ENCODE measurements at regions of chr1 and their contacts with region 1.

Region 1: GRCh38 chr1:209692745-209693504 is 11.7 kb upstream of the HSD11B1 start:
- DNase-seq: peak; percentile 65
- CTCF ChIP-seq: peak; percentile 65

Region 2: GRCh38 chr1:209576798-209577197 is 116.1 kb before region 1 on chr1:
- CTCF ChIA-PET with region 1: interaction called, 28 read pairs
- POLR2A ChIA-PET with region 1: no interaction called
- DNase-seq: peak; percentile 80
- CTCF ChIP-seq: peak; percentile 91

Region 3: GRCh38 chr1:209601809-209602657 is 90.9 kb before region 1 on chr1:
- CTCF ChIA-PET with region 1: interaction called, 10 read pairs
- POLR2A ChIA-PET with region 1: no interaction called
- DNase-seq: no peak
- CTCF ChIP-seq: peak; percentile 50

Region 4: DNA sequence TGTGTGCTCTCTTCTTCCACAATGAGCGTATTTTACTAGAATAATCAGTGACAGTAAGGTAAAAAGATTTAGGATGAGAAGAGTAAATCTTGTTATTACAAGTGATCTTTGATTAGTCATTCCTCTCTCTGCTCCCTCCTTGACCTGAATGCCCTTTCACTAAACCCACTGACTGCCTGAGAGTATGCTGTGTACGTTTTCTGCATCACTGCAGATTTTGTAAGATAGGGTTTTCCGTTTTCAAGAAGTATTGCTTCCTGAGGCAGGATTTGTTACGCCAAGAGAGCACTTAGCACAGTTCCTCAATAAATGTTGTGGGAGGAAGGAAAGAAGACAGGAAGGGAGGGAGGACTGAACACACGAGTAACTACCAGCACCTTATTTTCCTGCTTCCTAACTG is 33.0 kb before region 1 on chr1:
- CTCF ChIA-PET with region 1: interaction called, 14 read pairs
- POLR2A ChIA-PET with region 1: no interaction called
- DNase-seq: peak; percentile 55
- CTCF ChIP-seq: no peak

Region 5: GRCh38 chr1:209704584-209704983 is 11.7 kb after region 1 on chr1 and contains the start of gene HSD11B1:
- CTCF ChIA-PET with region 1: interaction called, 16 read pairs
- POLR2A ChIA-PET with region 1: no interaction called
- DNase-seq: no peak
- CTCF ChIP-seq: no peak

Region 6: DNA sequence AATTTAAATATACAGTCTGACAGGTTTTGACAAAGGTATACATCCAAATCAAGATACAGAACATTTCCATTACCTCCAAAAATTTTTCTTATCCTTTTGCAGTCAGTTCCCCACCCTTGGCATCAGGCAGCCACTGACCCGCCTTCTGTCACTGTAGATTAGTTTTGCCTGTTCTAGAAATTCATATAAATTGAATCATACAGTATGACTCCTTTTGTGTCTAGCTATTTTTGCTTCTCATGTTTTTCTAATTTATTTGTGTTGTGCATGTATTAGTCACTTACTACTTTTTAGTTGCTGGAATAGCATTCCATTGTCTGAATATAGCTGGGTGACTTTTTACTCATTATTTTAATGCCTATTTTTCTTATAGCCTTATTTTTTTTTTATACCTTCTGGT is 138.7 kb after region 1 on chr1:
- CTCF ChIA-PET with region 1: no interaction called
- POLR2A ChIA-PET with region 1: no interaction called
- DNase-seq: no peak
- CTCF ChIP-seq: no peak

Region 7: DNA sequence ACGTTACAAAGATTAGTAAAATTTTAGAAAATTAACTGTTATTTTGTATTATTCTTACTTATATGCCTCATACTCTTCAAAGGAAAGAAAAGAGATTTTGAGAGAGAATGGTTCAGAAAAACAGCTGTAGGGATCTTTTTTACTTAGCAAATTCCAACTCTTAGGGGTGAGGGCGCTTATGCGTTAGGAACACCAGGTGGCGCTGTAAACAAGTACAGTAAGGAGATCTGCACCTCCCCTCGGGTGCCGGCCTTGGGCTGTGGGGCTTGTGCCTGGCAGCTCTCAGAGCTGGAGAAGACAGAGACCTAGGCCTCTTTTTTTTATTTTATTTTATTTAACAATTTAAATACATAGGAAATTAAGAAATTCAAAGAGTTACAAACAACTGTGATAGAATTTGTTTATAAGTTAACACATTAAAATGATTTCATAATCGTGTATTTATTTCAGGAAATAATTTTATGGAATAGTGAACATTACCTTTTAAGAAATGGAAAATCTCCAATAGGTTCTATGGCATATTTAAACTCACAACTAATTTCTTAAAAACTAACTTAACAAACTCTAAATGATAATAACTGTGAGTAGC is 167.5 kb after region 1 on chr1:
- CTCF ChIA-PET with region 1: no interaction called
- POLR2A ChIA-PET with region 1: no interaction called
- DNase-seq: peak; percentile 79
- CTCF ChIP-seq: peak; percentile 88